A549 (cell line): ENCODE measurements at regions of chr4 and their contacts with region 1.

Region 1: DNA sequence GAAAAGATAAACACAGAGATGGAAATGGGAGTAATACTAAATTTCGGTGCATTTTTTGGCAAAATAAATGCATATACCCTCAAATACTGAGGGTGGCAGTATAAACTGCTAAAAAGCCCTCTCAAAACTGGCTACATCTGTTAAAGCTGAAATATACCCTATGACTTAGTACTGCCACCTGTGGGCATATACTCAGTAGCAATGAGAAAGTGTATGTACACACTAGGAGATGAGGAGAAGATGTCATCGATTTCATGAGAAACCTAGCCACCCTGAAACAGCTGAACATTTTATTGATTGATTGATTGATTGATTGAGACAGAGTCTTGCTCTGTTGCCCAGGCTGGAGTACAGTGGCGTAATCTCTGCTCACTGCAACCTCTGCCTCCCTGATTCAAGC is 12.2 kb upstream of the TMEM128 start:
- DNase-seq: peak; percentile 72 to 74
- ATAC-seq: peak; percentile 97 to 98
- H3K4me3 ChIP-seq: no peak overlapping the region
- H3K27ac ChIP-seq: no peak overlapping the region
- H3K4me1 ChIP-seq: peaks cover 10% of the 10 kb centered on the region; the same call in 2 of the 3 replicates
- CTCF ChIP-seq: peak; percentile 54
- EP300 ChIP-seq: no peak
- POLR2A ChIP-seq: no peak
- RAD21 ChIP-seq: peak; percentile 52 to 59

Region 2: GRCh38 chr4:4248029-4248884 is 12.0 kb before region 1 on chr4 and contains the start of gene TMEM128:
- CTCF ChIA-PET with region 1: interaction called, 18 read pairs
- POLR2A ChIA-PET with region 1: interaction called, 5 read pairs
- DNase-seq: peak; percentile 85 to 93
- ATAC-seq: peak; percentile 97 to 98
- H3K4me3 ChIP-seq: peak within 1 kb of the TSS; percentile 78
- H3K27ac ChIP-seq: peak within 1 kb of the TSS; percentile 91 to 92
- H3K4me1 ChIP-seq: peaks cover 12% of the 10 kb centered on the region
- CTCF ChIP-seq: peak; percentile 16; the same call in 1 of the 3 replicates
- EP300 ChIP-seq: no peak
- POLR2A ChIP-seq: peak; percentile 75
- RAD21 ChIP-seq: no peak
- polyA plus RNA-seq, gene TMEM128: 22.9 and 29.1 TPM in 2 replicates